WTC11 (cell line): ENCODE measurements at regions of chr19 and their contacts with region 1.

Region 1: DNA sequence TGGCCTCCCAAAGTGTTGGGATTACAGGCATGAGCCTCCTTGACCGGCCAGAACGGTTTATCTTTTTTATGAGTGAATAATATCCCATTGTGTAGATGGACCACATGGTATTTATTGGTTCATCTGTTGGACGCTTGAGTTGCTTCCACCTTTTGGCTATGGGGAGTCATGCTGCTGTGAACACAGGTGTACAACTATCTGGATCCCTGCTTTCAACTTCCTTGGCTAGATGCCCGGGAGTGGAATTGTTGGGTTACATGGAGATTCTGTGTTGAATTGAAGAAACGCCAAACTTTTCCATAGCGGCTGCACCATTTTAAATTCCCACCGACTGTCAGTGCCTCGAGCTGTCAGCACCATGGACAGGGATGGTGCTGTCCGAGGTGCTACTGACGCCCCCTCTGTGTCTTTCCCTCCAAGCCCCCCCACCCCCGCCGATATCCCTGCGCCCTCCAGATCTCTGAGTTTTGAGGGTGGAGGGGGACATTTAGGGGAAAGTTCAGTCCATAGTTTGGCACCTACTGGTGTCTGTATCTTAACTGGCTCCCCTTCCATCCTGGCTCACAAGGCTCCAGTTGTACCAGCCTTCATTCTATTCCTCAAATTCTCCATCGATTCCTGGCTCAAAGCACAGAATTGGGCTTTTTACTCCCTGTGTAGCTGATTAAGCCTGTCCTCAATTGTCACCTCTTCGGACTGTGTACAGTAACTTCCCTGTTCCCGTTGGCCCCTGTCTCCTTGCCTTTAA is 27.3 kb downstream of the PNPLA6 start:
- DNase-seq: peak; percentile 47
- ATAC-seq: no peak
- H3K4me3 Mint-ChIP-seq: no peak overlapping the region
- H3K27ac Mint-ChIP-seq: no peak overlapping the region
- H3K4me1 Mint-ChIP-seq: no peaks in the 10 kb centered on the region
- H3K27me3 Mint-ChIP-seq: no peaks in the 10 kb centered on the region; the same call in 1 of the 2 replicates
- CTCF ChIP-seq: no peak

Region 2: GRCh38 chr19:7366701-7367420 is 196.0 kb before region 1 on chr19:
- CTCF ChIA-PET with region 1: interaction called, 13 read pairs
- POLR2A ChIA-PET with region 1: no interaction called
- DNase-seq: no peak
- ATAC-seq: peak; percentile 46; the same call in 1 of the 2 replicates
- H3K4me3 Mint-ChIP-seq: no peak overlapping the region
- H3K27ac Mint-ChIP-seq: no peak overlapping the region
- H3K4me1 Mint-ChIP-seq: no peaks in the 10 kb centered on the region
- H3K27me3 Mint-ChIP-seq: peaks cover 38% of the 10 kb centered on the region
- CTCF ChIP-seq: peak; percentile 40; the same call in 1 of the 2 replicates

Region 3: GRCh38 chr19:7497292-7497691 is 65.5 kb before region 1 on chr19:
- CTCF ChIA-PET with region 1: interaction called, 14 read pairs
- POLR2A ChIA-PET with region 1: no interaction called
- DNase-seq: peak; percentile 53
- ATAC-seq: peak; percentile 78
- H3K4me3 Mint-ChIP-seq: no peak overlapping the region
- H3K27ac Mint-ChIP-seq: no peak overlapping the region
- H3K4me1 Mint-ChIP-seq: no peaks in the 10 kb centered on the region
- H3K27me3 Mint-ChIP-seq: peaks cover 69% of the 10 kb centered on the region
- CTCF ChIP-seq: 0 out of 2 replicates have a peak, but pooled peaks have one; percentile 15

Region 4: GRCh38 chr19:7582446-7582845 is 19.6 kb after region 1 on chr19:
- CTCF ChIA-PET with region 1: interaction called, 73 read pairs
- POLR2A ChIA-PET with region 1: no interaction called
- DNase-seq: no peak
- ATAC-seq: no peak; the same call in 1 of the 2 replicates
- H3K4me3 Mint-ChIP-seq: no peak overlapping the region
- H3K27ac Mint-ChIP-seq: no peak overlapping the region
- H3K4me1 Mint-ChIP-seq: no peaks in the 10 kb centered on the region
- H3K27me3 Mint-ChIP-seq: peaks cover 24% of the 10 kb centered on the region
- CTCF ChIP-seq: no peak

Region 5: DNA sequence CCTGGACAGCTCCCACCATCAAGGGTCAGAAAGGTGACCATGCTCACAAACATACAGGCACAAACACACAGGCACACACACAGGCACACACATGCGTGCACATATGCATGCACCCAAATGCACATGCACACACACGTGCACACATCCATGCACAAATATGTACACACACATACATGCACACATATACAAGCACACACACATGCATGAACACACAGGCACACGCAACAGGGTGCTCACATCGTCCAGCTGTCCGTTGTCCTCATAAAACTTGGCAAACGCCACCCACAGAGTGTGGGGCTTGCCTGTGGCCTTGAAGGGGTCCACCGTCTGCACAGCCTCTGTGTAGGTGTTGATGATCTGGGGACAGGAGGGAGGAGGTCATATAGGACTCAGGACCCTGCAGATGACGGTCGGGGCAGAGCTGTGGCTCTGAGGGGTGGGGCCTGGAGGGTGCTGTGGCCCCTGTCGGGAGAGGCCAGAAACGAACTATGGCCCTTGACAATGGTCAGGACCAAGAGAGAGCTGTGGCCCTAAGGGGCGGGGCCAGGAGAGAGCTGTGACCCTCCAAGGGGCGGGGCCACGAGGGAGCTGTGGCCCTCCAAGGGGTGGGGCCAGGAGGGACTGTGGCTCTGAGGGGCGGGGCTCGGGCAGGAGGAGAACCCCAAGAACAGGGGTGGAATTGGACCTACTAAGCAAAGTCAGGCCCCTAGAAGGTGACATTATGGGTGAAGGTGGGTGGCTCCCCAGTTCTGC is 60.3 kb after region 1 on chr19:
- CTCF ChIA-PET with region 1: interaction called, 16 read pairs
- POLR2A ChIA-PET with region 1: no interaction called
- DNase-seq: peak; percentile 72
- ATAC-seq: peak; percentile 89
- H3K4me3 Mint-ChIP-seq: no peak overlapping the region
- H3K27ac Mint-ChIP-seq: no peak overlapping the region
- H3K4me1 Mint-ChIP-seq: no peaks in the 10 kb centered on the region; the same call in 1 of the 2 replicates
- H3K27me3 Mint-ChIP-seq: no peaks in the 10 kb centered on the region
- CTCF ChIP-seq: no peak

Region 6: GRCh38 chr19:7670150-7670783 is 107.4 kb after region 1 on chr19:
- CTCF ChIA-PET with region 1: interaction called, 31 read pairs
- POLR2A ChIA-PET with region 1: no interaction called
- DNase-seq: peak; percentile 49
- ATAC-seq: peak; percentile 36
- H3K4me3 Mint-ChIP-seq: peak overlapping the region; percentile 86
- H3K27ac Mint-ChIP-seq: no peak overlapping the region
- H3K4me1 Mint-ChIP-seq: peaks cover 9% of the 10 kb centered on the region
- H3K27me3 Mint-ChIP-seq: peaks cover 90% of the 10 kb centered on the region
- CTCF ChIP-seq: no peak

Region 7: DNA sequence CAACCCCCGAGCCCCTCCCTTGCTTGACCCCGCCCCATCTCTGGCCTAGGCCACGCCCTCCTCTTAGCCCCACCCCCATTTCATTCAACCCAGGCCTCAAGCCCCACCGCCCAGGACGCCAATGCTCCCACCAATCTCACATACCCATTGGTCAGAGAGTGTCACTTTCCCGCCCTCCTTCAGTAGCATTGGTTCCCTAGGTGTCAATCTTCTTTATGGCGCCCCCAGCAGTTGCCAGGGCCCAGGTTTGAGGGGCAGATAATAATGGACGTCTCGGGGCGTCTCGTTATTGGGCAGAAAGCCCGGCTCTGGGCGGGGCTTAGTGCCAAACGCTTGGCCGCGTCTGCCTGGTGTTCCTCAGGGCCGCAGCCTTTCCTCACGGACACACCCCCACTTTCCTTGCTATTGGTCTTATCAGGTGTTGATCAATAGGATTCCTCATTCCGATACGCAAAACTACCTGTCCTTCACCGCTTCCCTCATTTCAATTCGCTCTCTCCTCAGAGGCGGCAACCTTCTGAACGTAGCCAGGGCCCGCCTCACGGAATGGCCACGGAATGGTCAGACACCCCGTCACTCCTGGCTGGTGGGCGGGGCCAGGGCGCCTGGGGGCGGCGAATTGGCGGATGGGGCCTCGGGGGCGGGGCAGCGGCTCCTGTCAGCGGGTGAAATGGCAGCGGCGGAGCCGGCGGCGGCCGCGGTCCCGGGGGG is 266.9 kb after region 1 on chr19 and contains the start of gene EVI5L:
- CTCF ChIA-PET with region 1: interaction called, 26 read pairs
- POLR2A ChIA-PET with region 1: no interaction called
- DNase-seq: peak; percentile 99
- ATAC-seq: peak; percentile 92
- H3K4me3 Mint-ChIP-seq: peak within 1 kb of the TSS; percentile 91
- H3K27ac Mint-ChIP-seq: no peak within 1 kb of the TSS
- H3K4me1 Mint-ChIP-seq: peaks cover 14% of the 10 kb centered on the region
- H3K27me3 Mint-ChIP-seq: peaks cover 55% of the 10 kb centered on the region
- CTCF ChIP-seq: no peak
- total RNA-seq, gene EVI5L: 10.5 to 13.7 TPM (median 13.6 TPM) in 3 replicates